ENCODE measurements at regions of chr16 and their contacts with region 1.

Region 1: GRCh38 chr16:641302-642188 is at the start of gene MCRIP2:
- DNase-seq: peak; percentile 93
- total RNA-seq, gene MCRIP2: 90.3 TPM

Region 2: DNA sequence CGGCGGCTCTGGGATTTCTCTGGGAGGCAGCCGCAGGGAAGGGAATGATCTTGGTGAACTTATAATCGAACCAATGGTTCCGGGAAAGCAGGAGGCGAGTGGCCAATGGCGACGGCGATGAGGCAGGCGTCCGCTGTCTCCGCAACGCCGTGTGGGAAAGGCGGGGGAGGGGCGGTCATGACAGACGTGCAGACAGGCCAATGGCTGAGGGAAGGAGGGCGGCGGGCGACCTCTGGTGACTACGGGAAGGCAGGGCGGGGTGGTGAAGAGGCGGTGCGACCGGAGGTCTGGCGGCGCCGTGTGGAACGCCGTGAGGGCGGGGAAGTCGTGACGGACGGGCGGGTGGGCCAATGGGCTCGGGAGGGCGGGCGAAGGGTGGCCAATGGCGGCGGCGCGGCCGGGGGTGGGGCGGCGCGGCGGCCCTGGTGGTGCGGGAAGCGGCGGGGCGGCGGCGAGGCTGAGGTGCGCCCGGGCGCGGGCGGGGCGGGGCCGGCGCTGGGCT is 51.8 kb before region 1 on chr16 and contains the start of gene RAB40C:
- intact Hi-C with region 1: loop called (anchors 5 kb)
- DNase-seq: peak; percentile 100
- total RNA-seq, gene RAB40C: 19.4 TPM

Region 3: GRCh38 chr16:660459-661183 is 19.1 kb after region 1 on chr16:
- intact Hi-C with region 1: loop called (anchors 2 kb)
- DNase-seq: peak; percentile 92

Measured in cardiac septum (tissue), 1 donor.